H1 (cell line): ENCODE measurements at regions of chr4 and their contacts with region 1.

Region 1: DNA sequence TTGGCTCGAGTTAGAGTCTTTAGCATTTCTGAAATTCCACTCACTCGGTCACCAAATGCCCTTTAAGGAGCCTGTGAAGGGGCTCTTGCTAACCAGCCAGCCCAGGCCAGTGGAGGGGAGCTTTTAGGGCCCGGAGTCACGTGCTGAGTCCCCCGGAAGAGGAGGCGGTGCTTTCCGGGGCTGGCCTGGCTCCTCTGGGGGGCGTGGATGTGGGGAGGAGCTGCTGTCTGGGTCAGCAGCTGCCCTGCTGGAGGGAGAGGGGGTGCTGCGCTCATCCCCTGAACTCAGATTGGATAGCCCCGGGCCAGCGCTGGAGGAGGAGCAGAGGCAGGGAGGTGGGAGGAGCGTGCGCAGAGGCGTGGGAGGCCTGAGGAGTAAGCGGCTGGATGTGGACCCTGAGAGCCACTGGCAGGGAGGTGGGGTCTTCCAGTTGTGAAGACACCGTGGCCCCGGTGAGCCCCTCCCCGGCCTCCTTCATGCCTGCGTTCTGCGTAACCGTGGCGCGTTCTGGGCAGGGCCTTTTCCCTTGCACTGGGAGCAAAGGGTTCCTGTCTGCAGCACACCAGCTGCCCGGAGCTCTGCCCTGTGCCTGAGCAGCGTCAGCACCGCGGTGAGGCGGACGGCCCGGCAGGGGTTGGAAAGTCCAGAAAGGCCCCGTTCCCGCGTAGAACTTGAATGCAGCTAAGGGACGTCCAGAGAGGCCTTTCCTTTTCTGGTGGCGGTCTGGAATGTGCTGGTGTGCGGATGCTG is 19.7 kb downstream of the MAEA start:
- DNase-seq: peak; percentile 88 to 89
- H3K4me3 ChIP-seq: peak overlapping the region; percentile 5 to 51 (median 45); a peak in 7 of 8 replicates
- H3K27ac ChIP-seq: peak overlapping the region; percentile 77
- H3K4me1 ChIP-seq: peaks cover 2 to 11% (median 3%) of the 10 kb centered on the region in 4 experiments; a peak in 4 of 7 replicates
- H3K27me3 ChIP-seq: no peaks in the 10 kb centered on the region
- CTCF ChIP-seq: no peak
- EP300 ChIP-seq: peak in 1 of 2 experiments; percentile 76; a peak in 1 of 3 replicates
- POLR2A ChIP-seq: peak in 1 of 2 experiments; percentile 55; a peak in 2 of 3 replicates
- RAD21 ChIP-seq: no peak

Region 2: GRCh38 chr4:1055721-1056590 is 253.5 kb before region 1 on chr4:
- CTCF ChIA-PET with region 1: no interaction called
- POLR2A ChIA-PET with region 1: no interaction called
- DNase-seq: no peak
- H3K4me3 ChIP-seq: peak overlapping the region in 1 of 4 experiments; percentile 5; a peak in 1 of 8 replicates
- H3K27ac ChIP-seq: no peak overlapping the region
- H3K4me1 ChIP-seq: peaks cover 0 to 7% (median 4%) of the 10 kb centered on the region in 4 experiments; a peak in 2 of 7 replicates
- H3K27me3 ChIP-seq: peaks cover 0 to 20% (median 14%) of the 10 kb centered on the region in 4 experiments; a peak in 6 of 7 replicates
- CTCF ChIP-seq: no peak
- EP300 ChIP-seq: no peak
- POLR2A ChIP-seq: no peak
- RAD21 ChIP-seq: no peak

Region 3: DNA sequence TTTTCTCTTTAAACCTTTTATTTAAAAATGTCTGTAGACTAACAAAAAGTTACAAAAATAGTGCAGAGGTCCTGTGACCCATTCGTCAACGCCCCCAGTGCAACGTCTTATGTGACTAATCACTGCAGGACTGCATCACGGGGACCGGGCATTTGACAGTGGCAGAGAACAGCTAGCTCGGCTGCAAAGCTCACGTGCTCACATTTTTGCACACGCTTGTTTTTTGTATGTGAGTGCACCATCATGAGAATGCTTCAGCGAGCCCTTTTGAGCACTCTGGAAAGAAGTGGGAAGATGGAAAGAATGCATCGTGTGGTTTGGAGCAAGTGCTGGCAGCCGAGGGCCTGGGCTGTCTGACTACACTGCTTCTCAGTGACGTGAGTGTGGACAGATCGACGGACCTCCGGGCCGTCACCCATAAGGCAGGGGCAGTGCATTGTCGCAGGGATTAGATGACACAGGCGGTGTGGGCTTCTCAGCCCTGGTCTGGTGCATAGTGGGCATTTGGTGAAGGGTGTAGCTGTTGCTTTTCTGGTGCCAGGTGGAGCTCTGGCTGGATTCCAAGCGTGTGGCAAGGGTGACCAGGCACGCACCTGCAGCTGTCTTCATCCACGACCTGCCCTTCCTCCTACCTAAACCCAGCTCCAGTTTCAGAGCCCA is 154.8 kb before region 1 on chr4:
- CTCF ChIA-PET with region 1: no interaction called
- POLR2A ChIA-PET with region 1: no interaction called
- DNase-seq: no peak
- H3K4me3 ChIP-seq: no peak overlapping the region
- H3K27ac ChIP-seq: no peak overlapping the region
- H3K4me1 ChIP-seq: no peaks in the 10 kb centered on the region
- H3K27me3 ChIP-seq: no peaks in the 10 kb centered on the region; a peak in 1 of 7 replicates
- CTCF ChIP-seq: no peak
- EP300 ChIP-seq: no peak
- POLR2A ChIP-seq: no peak
- RAD21 ChIP-seq: no peak

Region 4: DNA sequence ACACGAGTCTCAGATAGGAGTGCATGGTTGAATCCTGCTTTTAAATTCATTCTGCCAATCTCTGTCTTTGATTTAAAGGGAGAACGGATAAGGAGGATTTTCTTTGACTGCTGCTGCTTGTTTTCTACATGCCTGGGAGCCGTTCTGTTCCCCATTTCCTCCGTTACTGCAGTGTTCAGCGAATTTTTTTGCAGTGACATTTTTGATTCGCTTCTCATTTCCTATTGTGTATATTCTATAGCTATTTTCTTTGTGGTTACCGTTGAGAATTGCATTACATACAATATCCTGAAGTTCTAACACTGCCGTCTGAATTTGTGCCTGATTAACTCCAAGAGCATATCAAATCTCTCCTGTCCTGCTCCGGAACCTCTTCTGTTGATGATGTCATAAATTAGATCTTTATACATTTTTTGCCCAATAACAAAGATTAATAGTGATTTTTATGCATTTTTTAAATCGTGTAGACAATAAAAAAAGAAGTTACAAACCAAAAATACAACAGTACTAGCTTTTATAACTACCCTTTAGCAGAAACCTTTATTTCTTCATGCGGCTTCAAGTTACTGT is 34.5 kb before region 1 on chr4:
- CTCF ChIA-PET with region 1: no interaction called
- POLR2A ChIA-PET with region 1: no interaction called
- DNase-seq: no peak
- H3K4me3 ChIP-seq: no peak overlapping the region
- H3K27ac ChIP-seq: no peak overlapping the region
- H3K4me1 ChIP-seq: no peaks in the 10 kb centered on the region
- H3K27me3 ChIP-seq: no peaks in the 10 kb centered on the region
- CTCF ChIP-seq: no peak
- EP300 ChIP-seq: no peak
- POLR2A ChIP-seq: no peak
- RAD21 ChIP-seq: no peak

Region 5: DNA sequence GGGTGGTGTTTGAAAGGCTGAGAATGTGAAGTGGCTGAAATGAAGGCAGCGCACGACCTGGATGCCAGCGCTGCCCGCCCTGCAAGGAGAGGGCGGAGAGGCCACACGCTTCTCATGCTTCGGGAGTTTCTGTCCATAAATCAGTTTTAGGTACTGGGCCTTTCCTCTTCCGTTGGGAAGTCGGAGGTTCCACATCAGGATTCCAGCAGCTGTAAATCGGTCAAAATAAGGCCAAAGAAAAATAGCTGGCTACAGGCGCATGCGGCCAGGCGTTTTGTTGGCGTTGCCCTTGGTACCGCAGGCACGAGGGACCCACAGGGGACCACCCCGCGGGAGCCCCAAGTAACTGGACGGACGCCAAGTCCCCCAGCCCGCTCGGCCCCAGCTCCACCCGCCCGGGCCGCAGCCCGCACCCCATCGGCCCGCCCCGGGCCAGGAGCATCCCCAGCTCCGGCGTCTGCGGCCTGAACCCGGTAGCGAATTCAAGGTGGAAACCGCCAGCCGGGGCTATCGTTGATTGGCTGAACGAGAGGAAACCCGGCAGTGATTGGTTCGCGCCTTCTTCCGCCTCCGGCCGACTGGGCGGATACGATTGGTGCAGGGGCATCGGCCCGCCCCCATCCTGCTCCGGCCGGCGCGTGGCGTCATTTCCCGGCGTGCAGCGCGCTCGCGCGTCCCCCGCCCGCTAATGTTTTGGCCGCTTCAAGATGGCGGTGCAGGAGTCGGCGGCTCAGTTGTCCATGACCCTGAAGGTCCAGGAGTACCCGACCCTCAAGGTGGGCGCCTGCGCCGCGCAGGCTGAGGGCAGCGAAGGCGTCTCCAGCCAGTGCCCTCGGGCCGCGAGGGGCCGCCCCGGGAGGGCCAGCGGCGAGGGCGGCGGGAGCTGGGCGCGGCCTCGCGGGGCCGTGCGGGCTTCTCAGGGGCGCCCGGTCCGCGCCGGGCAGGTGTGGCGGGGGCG is 19.9 kb before region 1 on chr4 and contains the start of gene MAEA:
- CTCF ChIA-PET with region 1: interaction called, 3 read pairs
- POLR2A ChIA-PET with region 1: interaction called, 13 read pairs
- DNase-seq: peak; percentile 85 to 95
- H3K4me3 ChIP-seq: peak within 1 kb of the TSS; percentile 91 to 97 (median 92)
- H3K27ac ChIP-seq: peak within 1 kb of the TSS; percentile 93
- H3K4me1 ChIP-seq: peaks cover 2 to 16% (median 7%) of the 10 kb centered on the region in 4 experiments
- H3K27me3 ChIP-seq: 0 out of 7 replicates have a peak, but pooled peaks cover 0 to 1% (median 0%) of the 10 kb centered on the region in 4 experiments
- CTCF ChIP-seq: no peak
- EP300 ChIP-seq: no peak
- POLR2A ChIP-seq: peak in 1 of 2 experiments; percentile 91; a peak in 2 of 3 replicates
- RAD21 ChIP-seq: no peak
- total RNA-seq, gene MAEA: 75.3 and 75.8 TPM in 2 replicates